Mammary epithelial cell (primary cell): ENCODE measurements at regions of chr5 and their contacts with region 1.

Region 1: GRCh38 chr5:12480487-12480886 is 576.2 kb upstream of the CTNND2 start:
- DNase-seq: no peak
- H3K4me3 ChIP-seq: no peak overlapping the region
- H3K27ac ChIP-seq: no peak overlapping the region
- H3K4me1 ChIP-seq: no peaks in the 10 kb centered on the region
- H3K27me3 ChIP-seq: no peaks in the 10 kb centered on the region
- CTCF ChIP-seq: no peak

Region 2: DNA sequence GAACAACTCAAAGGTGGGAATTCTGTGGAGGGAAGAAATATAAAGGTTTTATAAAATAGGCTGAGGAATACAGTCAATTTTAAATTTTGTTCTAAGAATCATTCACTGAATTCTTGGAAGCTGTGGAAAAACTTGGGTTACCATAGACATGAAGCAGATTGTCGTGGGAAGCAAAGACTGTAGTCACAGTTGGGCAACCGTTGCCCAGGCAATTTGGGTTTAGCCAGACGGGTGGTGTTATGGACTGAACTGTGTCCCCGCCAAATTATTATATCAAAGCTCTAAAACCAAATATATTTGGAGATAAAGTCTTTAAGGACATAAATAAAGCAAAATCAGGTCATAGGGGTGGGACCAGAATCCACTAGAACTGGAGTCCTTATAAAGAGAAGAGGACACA is 112.5 kb before region 1 on chr5:
- CTCF ChIA-PET with region 1: no interaction called
- dilution Hi-C with region 1: no loop called
- in situ Hi-C with region 1: no loop called
- intact Hi-C with region 1: no loop called
- DNase-seq: no peak
- H3K4me3 ChIP-seq: no peak overlapping the region
- H3K27ac ChIP-seq: no peak overlapping the region
- H3K4me1 ChIP-seq: no peaks in the 10 kb centered on the region
- H3K27me3 ChIP-seq: no peaks in the 10 kb centered on the region
- CTCF ChIP-seq: no peak

Region 3: GRCh38 chr5:12392246-12392645 is 88.2 kb before region 1 on chr5:
- CTCF ChIA-PET with region 1: no interaction called
- dilution Hi-C with region 1: no loop called
- in situ Hi-C with region 1: no loop called
- intact Hi-C with region 1: no loop called
- DNase-seq: no peak
- H3K4me3 ChIP-seq: no peak overlapping the region
- H3K27ac ChIP-seq: no peak overlapping the region
- H3K4me1 ChIP-seq: no peaks in the 10 kb centered on the region
- H3K27me3 ChIP-seq: no peaks in the 10 kb centered on the region
- CTCF ChIP-seq: no peak

Region 4: GRCh38 chr5:12460493-12461261 is 19.8 kb before region 1 on chr5:
- CTCF ChIA-PET with region 1: interaction called, 15 read pairs
- dilution Hi-C with region 1: no loop called
- in situ Hi-C with region 1: no loop called
- intact Hi-C with region 1: no loop called
- DNase-seq: peak; percentile 2
- H3K4me3 ChIP-seq: no peak overlapping the region
- H3K27ac ChIP-seq: no peak overlapping the region
- H3K4me1 ChIP-seq: peaks cover 8% of the 10 kb centered on the region
- H3K27me3 ChIP-seq: no peaks in the 10 kb centered on the region
- CTCF ChIP-seq: no peak